Activated CD8-positive, alpha-beta T cell treated with anti-CD3 and anti-CD28 coated beads, Interleukin-2, amount 10 ng/mL, durations not matched to agents 7 days and 5 days (primary cell): ENCODE measurements at regions of chr1 and their contacts with region 1.

Region 1: GRCh38 chr1:198681831-198682759 is 43.3 kb downstream of the PTPRC start:
- DNase-seq: peak; percentile 94
- ATAC-seq: peak; percentile 76
- H3K4me3 Mint-ChIP-seq: peak overlapping the region; percentile 74
- H3K27ac Mint-ChIP-seq: peak overlapping the region; percentile 96
- H3K4me1 Mint-ChIP-seq: peaks cover 84% of the 10 kb centered on the region
- H3K27me3 Mint-ChIP-seq: no peaks in the 10 kb centered on the region

Region 2: DNA sequence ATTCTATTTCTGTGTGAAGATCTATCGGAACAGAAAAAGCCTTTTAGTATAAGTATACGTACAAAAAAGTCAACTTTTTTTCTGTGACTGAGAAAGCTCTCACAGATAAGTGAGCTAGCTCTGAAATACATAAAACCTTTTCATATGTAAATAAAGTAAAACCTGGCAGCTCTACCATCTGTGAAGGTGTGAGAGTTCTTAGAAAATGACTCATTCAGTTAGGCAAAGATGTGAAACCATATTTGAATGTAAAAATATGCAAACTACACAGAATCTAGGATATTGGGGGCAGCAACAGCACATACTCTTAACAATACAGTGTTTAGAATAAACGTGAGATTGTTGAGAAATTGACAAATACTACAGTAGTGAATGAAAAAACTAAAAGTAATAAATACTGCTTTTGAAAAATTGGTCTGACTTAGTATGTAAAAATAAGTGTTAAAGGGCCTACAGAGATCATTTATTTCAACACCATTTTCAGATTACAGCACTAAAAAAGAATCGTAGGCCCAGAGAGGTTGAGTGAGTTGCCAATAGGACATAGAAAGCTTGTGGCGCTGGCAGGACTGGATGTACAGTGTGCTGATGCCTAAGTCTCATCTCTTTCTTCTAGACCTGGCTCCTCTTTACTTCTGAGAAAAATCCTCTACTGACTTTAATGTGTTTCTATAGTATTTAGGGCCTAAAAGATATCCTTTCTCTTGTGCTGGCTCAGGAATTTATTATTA is 161.4 kb before region 1 on chr1:
- CTCF ChIA-PET with region 1: interaction called, 16 read pairs
- POLR2A ChIA-PET with region 1: interaction called, 5 read pairs
- DNase-seq: no peak
- ATAC-seq: peak; percentile 63
- H3K4me3 Mint-ChIP-seq: peak overlapping the region; percentile 71
- H3K27ac Mint-ChIP-seq: peak overlapping the region; percentile 77
- H3K4me1 Mint-ChIP-seq: peaks cover 57% of the 10 kb centered on the region
- H3K27me3 Mint-ChIP-seq: no peaks in the 10 kb centered on the region

Region 3: GRCh38 chr1:198638894-198639635 is 43.0 kb before region 1 on chr1 and contains the start of gene PTPRC:
- CTCF ChIA-PET with region 1: interaction called, 6 read pairs
- POLR2A ChIA-PET with region 1: interaction called, 25 read pairs
- DNase-seq: peak; percentile 65
- ATAC-seq: peak; percentile 62
- H3K4me3 Mint-ChIP-seq: peak within 1 kb of the TSS; percentile 83
- H3K27ac Mint-ChIP-seq: peak within 1 kb of the TSS; percentile 97
- H3K4me1 Mint-ChIP-seq: peaks cover 48% of the 10 kb centered on the region
- H3K27me3 Mint-ChIP-seq: no peaks in the 10 kb centered on the region
- total RNA-seq, gene PTPRC: 604 to 619 TPM

Region 4: DNA sequence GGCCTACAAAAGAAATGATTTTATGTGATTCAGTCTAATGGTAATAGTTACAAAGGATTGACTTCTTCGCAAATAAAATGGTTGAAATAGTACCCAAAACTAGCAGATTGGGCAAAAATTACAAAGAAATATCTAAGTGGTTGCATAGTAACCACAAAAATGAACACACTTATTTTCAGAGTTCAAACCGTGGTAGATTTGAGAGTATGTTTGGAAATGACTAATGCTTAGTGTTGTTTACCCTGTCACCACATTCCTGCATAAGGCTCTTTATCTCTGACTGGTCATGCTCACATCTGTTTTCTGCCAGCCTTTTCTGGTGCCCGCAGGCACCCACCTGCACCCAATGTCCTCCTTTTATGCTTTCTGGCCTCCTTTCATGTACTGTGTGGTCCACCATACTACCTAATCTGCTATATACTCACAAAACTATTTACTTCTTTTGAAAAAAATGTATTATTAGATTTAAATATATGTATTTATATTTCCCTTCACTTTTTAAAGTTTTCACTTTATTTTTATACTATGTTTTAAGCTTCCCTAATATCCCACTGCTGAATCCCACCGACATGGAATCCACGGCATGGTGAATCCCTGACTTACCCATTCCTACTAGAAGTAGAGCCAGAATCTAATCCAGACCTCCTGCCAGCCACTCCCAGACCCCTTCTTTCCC is 12.9 kb before region 1 on chr1:
- CTCF ChIA-PET with region 1: interaction called, 8 read pairs
- POLR2A ChIA-PET with region 1: interaction called, 27 read pairs
- DNase-seq: peak; percentile 52
- ATAC-seq: peak; percentile 79
- H3K4me3 Mint-ChIP-seq: peak overlapping the region; percentile 21
- H3K27ac Mint-ChIP-seq: peak overlapping the region; percentile 80
- H3K4me1 Mint-ChIP-seq: peaks cover 84% of the 10 kb centered on the region
- H3K27me3 Mint-ChIP-seq: no peaks in the 10 kb centered on the region

Region 5: GRCh38 chr1:198959032-198959431 is 276.9 kb after region 1 on chr1:
- CTCF ChIA-PET with region 1: no interaction called
- POLR2A ChIA-PET with region 1: no interaction called
- DNase-seq: no peak
- ATAC-seq: peak; percentile 72
- H3K4me3 Mint-ChIP-seq: no peak overlapping the region
- H3K27ac Mint-ChIP-seq: peak overlapping the region; percentile 17
- H3K4me1 Mint-ChIP-seq: peaks cover 35% of the 10 kb centered on the region
- H3K27me3 Mint-ChIP-seq: no peaks in the 10 kb centered on the region